Activated T-helper 2 cell treated with anti-CD3 and anti-CD28 coated beads, Interferon-gamma antibody, Interleukin-2, Interleukin-4, amounts not matched to agents 10 μg/mL and 5 μg/mL and 100 μg/mL, durations not matched to agents 14 hours and 24 hours and 36 hours (primary cell): ENCODE measurements at regions of chr16 and their contacts with region 1.

Region 1: DNA sequence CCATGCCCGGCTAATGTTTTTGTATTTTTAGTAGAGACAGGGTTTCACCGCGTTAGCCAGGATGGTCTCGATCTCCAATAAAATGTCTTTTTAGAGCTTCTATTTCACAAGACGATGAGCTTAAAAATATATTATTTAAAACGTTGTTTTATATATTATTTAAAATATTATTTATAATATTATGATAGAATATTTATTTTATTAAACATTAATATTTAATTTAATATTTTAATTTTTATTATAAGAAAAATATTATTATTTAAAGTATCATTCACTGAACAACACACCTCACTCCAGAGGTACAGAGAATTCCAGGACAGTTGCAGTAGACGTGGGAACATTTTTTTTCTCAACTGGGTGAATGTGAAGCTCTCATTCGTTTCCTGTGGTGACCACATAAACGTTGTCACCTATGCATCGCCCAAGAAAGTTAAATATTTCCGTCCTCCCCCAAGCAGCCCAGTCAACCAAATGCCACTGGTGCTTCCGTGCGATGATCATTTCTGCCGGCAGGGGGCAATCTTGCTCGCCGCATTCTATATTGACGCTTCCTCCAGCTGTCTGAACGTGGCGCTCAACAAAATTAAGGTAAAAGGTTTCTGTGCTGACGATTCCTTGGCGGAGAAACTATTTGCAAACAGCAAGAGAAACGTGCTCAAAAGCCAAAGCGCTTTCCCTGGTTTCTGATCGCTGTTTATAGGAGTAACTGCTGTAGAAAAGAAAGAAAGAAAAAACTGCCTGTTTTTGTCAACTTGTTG is 41.7 kb upstream of the PRSS54 start:
- DNase-seq: peak; percentile 78
- H3K4me3 Mint-ChIP-seq: no peak overlapping the region
- H3K27ac Mint-ChIP-seq: no peak overlapping the region
- H3K4me1 Mint-ChIP-seq: peaks cover 7% of the 10 kb centered on the region
- H3K27me3 Mint-ChIP-seq: no peaks in the 10 kb centered on the region

Region 2: DNA sequence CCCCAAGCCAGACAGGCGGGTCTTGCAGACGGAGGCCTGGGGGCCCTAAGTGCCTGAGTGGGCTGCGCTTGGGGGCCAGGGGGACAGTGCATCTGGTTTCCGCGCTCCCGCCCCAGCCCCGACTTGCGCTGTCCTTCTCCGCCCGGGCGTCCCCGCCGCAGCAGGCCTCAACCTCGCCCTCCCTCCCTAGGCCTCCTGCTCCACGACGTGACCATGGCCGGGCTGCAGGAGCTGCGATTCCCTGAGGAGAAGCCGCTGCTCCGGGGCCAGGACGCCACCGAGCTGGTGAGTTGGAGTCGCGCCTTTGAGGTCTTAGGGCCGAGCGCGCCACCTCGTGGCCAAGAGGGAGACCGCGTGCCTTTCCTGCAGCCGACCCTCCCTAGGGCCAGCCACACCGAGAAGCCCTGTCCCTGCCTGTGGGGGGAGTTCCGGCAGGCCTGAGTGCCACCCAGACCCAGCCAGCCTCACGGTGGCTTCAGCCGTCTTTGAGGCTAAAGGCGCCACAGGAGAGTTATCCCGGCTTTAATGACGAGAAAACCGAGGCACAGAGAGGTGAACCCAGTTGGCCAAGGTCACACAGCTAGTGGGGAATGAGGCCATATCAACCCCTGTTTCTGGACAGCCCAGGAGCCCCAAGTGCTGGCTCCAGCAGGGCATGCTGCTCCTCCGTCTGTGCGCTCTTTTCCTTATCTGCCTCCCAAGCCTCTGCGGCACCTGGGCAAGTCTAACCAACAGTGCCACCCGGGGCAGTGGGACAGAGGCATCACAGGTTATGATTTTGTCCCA is 151.2 kb after region 1 on chr16:
- intact Hi-C with region 1: loop called (anchors 1 kb)
- DNase-seq: peak; percentile 50
- H3K4me3 Mint-ChIP-seq: no peak overlapping the region
- H3K27ac Mint-ChIP-seq: no peak overlapping the region
- H3K4me1 Mint-ChIP-seq: no peaks in the 10 kb centered on the region
- H3K27me3 Mint-ChIP-seq: peaks cover 4% of the 10 kb centered on the region

Region 3: DNA sequence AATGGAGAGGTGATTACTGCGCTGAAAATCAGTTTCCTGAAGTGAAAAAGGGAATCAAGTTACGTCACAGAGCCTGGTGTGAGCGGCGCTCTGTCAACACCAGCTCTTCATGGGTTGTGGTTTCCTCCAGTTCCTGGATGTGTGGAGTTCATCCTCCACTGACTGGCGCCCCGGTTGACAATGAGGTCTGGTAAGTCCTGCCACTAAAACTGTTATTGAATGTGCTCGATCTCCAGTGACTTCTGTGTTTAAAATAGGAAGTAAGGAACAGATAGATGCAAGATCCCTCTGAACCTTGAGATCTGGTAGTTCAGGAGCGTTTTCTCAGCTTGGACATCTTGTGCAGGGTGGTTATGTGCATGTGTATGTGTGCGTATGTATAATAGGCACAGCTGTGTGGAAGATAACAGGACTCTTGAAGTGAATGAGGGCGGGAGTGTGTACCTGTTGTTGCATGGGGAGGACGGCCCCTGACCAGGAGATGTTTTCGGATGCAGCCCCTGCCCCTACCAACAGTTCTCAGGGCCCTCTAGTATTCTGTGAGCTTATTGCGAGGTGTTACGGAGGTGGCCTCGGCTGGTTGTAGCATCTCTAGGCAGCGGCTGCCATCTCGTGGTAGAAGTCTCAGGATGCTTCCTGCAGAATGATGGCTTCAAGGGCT is 419.6 kb after region 1 on chr16:
- intact Hi-C with region 1: loop called (anchors 2 kb)
- DNase-seq: peak; percentile 62
- H3K4me3 Mint-ChIP-seq: no peak overlapping the region
- H3K27ac Mint-ChIP-seq: no peak overlapping the region
- H3K4me1 Mint-ChIP-seq: peaks cover 7% of the 10 kb centered on the region
- H3K27me3 Mint-ChIP-seq: no peaks in the 10 kb centered on the region